ENCODE measurements at regions of chr10 and their contacts with region 1.

Region 1: GRCh38 chr10:119445311-119445934 is 97.1 kb downstream of the RGS10 start:
- DNase-seq: peak; percentile 93
- ATAC-seq: peak; percentile 90
- H3K4me3 Mint-ChIP-seq: no peak overlapping the region
- H3K27ac Mint-ChIP-seq: no peak overlapping the region
- H3K4me1 Mint-ChIP-seq: peaks cover 6% of the 10 kb centered on the region
- H3K27me3 Mint-ChIP-seq: no peaks in the 10 kb centered on the region

Region 2: DNA sequence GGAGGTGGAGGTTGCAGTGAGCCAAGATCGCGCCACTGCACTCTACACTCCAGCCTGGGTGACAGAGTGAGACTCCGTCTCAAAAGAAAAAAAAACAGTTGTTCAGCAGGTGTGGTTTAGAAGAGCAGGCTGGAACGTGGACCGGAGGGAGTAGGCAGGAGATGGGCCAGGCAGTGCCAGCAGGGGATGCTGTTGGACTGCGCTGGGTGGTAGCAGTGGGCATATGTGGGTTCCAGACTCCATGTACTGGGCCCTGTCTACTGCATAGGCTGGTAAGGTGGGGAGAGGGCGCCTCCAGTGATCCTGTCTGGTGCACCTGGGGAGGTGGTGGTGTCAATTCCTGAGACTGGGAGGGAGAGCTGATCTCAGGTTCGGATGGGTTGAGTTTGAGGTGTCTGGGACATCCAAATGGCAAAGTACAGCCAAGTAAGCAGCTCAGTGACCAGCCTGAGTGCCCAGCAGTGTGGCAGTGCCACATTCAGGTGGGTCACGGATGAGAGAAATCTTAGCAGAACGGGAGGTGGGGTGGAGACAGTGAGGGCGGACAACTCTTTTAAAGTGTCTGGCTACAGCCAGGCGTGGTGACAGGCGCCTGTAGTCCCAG is 305.9 kb before region 1 on chr10:
- CTCF ChIA-PET with region 1: interaction called, 4 read pairs
- POLR2A ChIA-PET with region 1: no interaction called
- intact Hi-C with region 1: loop called in 1 of 2 experiments (anchors 1 kb)
- DNase-seq: peak; percentile 73
- ATAC-seq: peak; percentile 76
- H3K4me3 Mint-ChIP-seq: no peak overlapping the region
- H3K27ac Mint-ChIP-seq: peak overlapping the region; percentile 14
- H3K4me1 Mint-ChIP-seq: peaks cover 14% of the 10 kb centered on the region
- H3K27me3 Mint-ChIP-seq: no peaks in the 10 kb centered on the region

Region 3: GRCh38 chr10:119178372-119179119 is 266.9 kb before region 1 on chr10 and contains the start of gene PRDX3:
- CTCF ChIA-PET with region 1: interaction called, 3 read pairs
- POLR2A ChIA-PET with region 1: no interaction called
- intact Hi-C with region 1: loop called in 1 of 2 experiments (anchors 1 kb)
- DNase-seq: peak; percentile 98
- ATAC-seq: peak; percentile 95
- H3K4me3 Mint-ChIP-seq: peak within 1 kb of the TSS; percentile 88
- H3K27ac Mint-ChIP-seq: peak within 1 kb of the TSS; percentile 95
- H3K4me1 Mint-ChIP-seq: peaks cover 36% of the 10 kb centered on the region
- H3K27me3 Mint-ChIP-seq: no peaks in the 10 kb centered on the region
- total RNA-seq, gene PRDX3: 160 to 217 TPM

Region 4: GRCh38 chr10:119199231-119199992 is 246.0 kb before region 1 on chr10:
- CTCF ChIA-PET with region 1: interaction called, 58 read pairs
- POLR2A ChIA-PET with region 1: interaction called, 3 read pairs
- intact Hi-C with region 1: loop called in 1 of 2 experiments (anchors 1 kb)
- DNase-seq: peak; percentile 66
- ATAC-seq: peak; percentile 85
- H3K4me3 Mint-ChIP-seq: no peak overlapping the region
- H3K27ac Mint-ChIP-seq: no peak overlapping the region
- H3K4me1 Mint-ChIP-seq: peaks cover 13% of the 10 kb centered on the region
- H3K27me3 Mint-ChIP-seq: no peaks in the 10 kb centered on the region

Region 5: DNA sequence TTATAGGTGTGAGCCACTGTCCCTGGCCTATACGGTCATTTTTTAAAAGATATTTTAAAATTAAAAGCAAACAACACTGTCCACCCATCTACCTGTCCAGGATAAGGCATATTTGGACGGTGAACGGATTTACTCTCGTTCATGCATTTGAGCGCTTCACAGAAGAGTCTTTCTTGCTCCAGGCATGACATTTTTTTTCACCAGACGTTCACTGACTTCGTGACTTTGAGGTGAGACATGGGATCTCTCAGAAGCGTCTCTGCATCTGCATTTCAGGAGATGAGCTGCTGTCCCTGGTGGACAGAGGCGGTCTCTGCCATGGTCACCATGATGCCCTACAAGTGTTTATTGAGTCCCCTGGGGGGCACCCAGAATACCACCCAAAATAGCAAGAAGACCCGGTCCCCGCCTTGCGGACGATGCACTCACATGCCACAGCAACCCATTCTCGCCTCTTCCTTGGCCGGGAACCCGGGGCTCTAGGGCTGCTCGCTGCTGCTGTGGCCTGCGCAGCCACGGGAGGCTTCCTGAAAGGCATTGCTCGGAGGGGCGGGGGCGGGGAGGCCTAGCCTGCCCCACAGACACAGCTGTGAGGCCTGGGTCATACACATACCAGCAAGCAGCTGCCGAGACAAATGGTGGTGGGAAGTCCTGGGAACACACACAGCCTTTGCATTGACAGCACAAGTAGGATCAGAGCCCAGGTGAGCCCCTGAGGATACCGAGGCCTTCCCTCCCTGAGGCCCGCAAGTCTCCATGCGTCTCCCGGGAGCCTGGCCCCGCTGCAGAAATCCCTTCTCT is 12.7 kb after region 1 on chr10:
- CTCF ChIA-PET with region 1: interaction called, 11 read pairs
- POLR2A ChIA-PET with region 1: no interaction called
- intact Hi-C with region 1: no loop called
- DNase-seq: no peak
- ATAC-seq: no peak
- H3K4me3 Mint-ChIP-seq: no peak overlapping the region
- H3K27ac Mint-ChIP-seq: no peak overlapping the region
- H3K4me1 Mint-ChIP-seq: peaks cover 4% of the 10 kb centered on the region
- H3K27me3 Mint-ChIP-seq: no peaks in the 10 kb centered on the region

Region 6: GRCh38 chr10:119478111-119478802 is 32.8 kb after region 1 on chr10:
- CTCF ChIA-PET with region 1: interaction called, 4 read pairs
- POLR2A ChIA-PET with region 1: no interaction called
- intact Hi-C with region 1: loop called in 1 of 2 experiments (anchors 5 kb)
- DNase-seq: peak; percentile 72
- ATAC-seq: peak; percentile 93
- H3K4me3 Mint-ChIP-seq: peak overlapping the region; percentile 14
- H3K27ac Mint-ChIP-seq: peak overlapping the region; percentile 38
- H3K4me1 Mint-ChIP-seq: peaks cover 28% of the 10 kb centered on the region
- H3K27me3 Mint-ChIP-seq: no peaks in the 10 kb centered on the region

Region 7: GRCh38 chr10:119489991-119490326 is 44.5 kb after region 1 on chr10:
- CTCF ChIA-PET with region 1: interaction called, 5 read pairs
- POLR2A ChIA-PET with region 1: no interaction called
- intact Hi-C with region 1: loop called in 1 of 2 experiments (anchors 1 kb)
- DNase-seq: no peak
- ATAC-seq: no peak
- H3K4me3 Mint-ChIP-seq: peak overlapping the region; percentile 67
- H3K27ac Mint-ChIP-seq: peak overlapping the region; percentile 92
- H3K4me1 Mint-ChIP-seq: peaks cover 43% of the 10 kb centered on the region
- H3K27me3 Mint-ChIP-seq: no peaks in the 10 kb centered on the region

Region 8: DNA sequence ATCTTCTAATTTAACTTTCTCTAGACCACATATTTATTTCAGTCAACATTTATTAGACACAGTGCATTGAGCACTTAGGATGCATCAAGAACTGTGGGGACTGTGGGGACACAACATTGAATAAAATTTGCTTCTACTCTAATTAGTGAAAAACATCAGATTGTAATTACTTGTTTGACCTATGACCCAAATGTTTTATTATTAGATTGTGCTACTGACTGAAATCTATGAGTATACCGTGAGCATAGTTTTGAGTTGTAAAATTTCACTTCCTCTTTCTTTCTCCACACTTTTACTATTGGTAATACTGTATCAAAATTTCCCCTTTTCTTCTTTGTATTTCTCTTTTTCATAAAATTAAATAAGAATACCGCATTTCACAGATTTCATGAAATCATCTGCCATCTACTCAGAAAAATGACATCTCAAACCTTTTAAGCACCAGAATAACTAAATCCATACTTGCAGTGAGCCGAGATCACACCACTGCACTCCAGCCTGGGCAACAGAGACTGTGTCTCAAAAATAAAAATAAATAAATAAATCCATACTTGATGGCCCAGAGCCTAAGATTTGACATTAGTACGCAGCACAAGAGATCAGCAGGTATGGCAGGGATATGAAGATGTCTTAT is 255.0 kb after region 1 on chr10:
- CTCF ChIA-PET with region 1: no interaction called
- POLR2A ChIA-PET with region 1: no interaction called
- intact Hi-C with region 1: no loop called
- DNase-seq: no peak
- ATAC-seq: no peak
- H3K4me3 Mint-ChIP-seq: no peak overlapping the region
- H3K27ac Mint-ChIP-seq: peak overlapping the region; percentile 17
- H3K4me1 Mint-ChIP-seq: peaks cover 47% of the 10 kb centered on the region
- H3K27me3 Mint-ChIP-seq: no peaks in the 10 kb centered on the region

Measured in activated CD4-positive, alpha-beta T cell treated with anti-CD3 and anti-CD28 coated beads for 36 hours (primary cell).